H1 (cell line): ENCODE measurements at regions of chr2 and their contacts with region 1.

Region 1: GRCh38 chr2:120949027-120949956 is 213.6 kb downstream of the GLI2 start:
- DNase-seq: no peak
- H3K4me3 ChIP-seq: no peak overlapping the region
- H3K27ac ChIP-seq: no peak overlapping the region
- H3K4me1 ChIP-seq: no peaks in the 10 kb centered on the region; a peak in 1 of 7 replicates
- H3K27me3 ChIP-seq: no peaks in the 10 kb centered on the region
- CTCF ChIP-seq: peak in 1 of 3 experiments; percentile 45; a peak in 1 of 4 replicates
- EP300 ChIP-seq: no peak
- POLR2A ChIP-seq: no peak
- RAD21 ChIP-seq: peak; percentile 11 to 33; a peak in 2 of 4 replicates

Region 2: GRCh38 chr2:120826716-120827410 is 122.4 kb before region 1 on chr2:
- CTCF ChIA-PET with region 1: no interaction called
- POLR2A ChIA-PET with region 1: no interaction called
- DNase-seq: no peak
- H3K4me3 ChIP-seq: no peak overlapping the region
- H3K27ac ChIP-seq: no peak overlapping the region
- H3K4me1 ChIP-seq: peaks cover 0 to 21% (median 11%) of the 10 kb centered on the region in 4 experiments; a peak in 6 of 7 replicates
- H3K27me3 ChIP-seq: no peaks in the 10 kb centered on the region
- CTCF ChIP-seq: no peak
- EP300 ChIP-seq: no peak
- POLR2A ChIP-seq: no peak
- RAD21 ChIP-seq: no peak

Region 3: GRCh38 chr2:120934574-120935340 is 14.5 kb before region 1 on chr2:
- CTCF ChIA-PET with region 1: interaction called, 12 read pairs
- POLR2A ChIA-PET with region 1: no interaction called
- DNase-seq: no peak
- H3K4me3 ChIP-seq: no peak overlapping the region
- H3K27ac ChIP-seq: no peak overlapping the region
- H3K4me1 ChIP-seq: peaks cover 0 to 5% (median 3%) of the 10 kb centered on the region in 4 experiments; a peak in 3 of 7 replicates
- H3K27me3 ChIP-seq: no peaks in the 10 kb centered on the region
- CTCF ChIP-seq: no peak
- EP300 ChIP-seq: no peak
- POLR2A ChIP-seq: no peak
- RAD21 ChIP-seq: no peak

Region 4: DNA sequence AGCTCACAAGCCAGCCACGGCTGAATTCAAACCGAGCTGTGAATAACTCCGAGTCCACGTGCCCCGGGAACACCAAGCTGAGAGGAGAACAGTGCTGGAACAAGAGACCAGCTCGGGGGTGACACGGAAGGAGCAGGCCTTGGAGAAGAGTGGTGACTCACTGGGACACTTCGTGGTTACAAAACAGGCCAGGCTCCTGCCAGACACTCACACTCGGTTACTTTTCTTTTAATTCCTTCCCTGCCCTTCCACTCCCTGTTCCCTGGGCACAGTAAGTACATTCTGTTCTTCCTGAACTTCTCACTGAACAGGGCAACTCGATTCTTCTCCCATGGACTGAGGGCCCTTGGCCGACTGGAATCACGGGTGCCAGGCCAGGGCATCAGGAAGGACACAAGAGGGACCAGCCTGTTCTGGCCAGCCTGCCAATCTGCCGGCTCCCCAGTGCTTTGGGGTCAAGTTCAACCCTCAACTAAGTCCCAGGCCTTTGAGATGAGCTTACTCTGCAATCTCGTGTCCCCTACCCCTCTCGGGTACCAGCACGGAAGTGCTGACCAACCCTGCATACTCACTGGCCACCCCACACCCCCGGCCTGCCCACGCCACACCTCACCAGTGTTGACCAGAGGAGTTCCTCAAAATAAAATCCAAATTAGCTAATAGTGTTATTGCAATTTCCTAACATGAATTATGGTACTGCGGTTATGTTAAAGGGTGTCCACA is 248.2 kb after region 1 on chr2:
- CTCF ChIA-PET with region 1: no interaction called
- POLR2A ChIA-PET with region 1: no interaction called
- DNase-seq: no peak
- H3K4me3 ChIP-seq: no peak overlapping the region
- H3K27ac ChIP-seq: no peak overlapping the region
- H3K4me1 ChIP-seq: peaks cover 0 to 9% (median 6%) of the 10 kb centered on the region in 4 experiments; a peak in 2 of 7 replicates
- H3K27me3 ChIP-seq: no peaks in the 10 kb centered on the region; a peak in 2 of 7 replicates
- CTCF ChIP-seq: no peak
- EP300 ChIP-seq: no peak
- POLR2A ChIP-seq: no peak
- RAD21 ChIP-seq: no peak